BJ (cell line): ENCODE measurements at regions of chr4 and their contacts with region 1.

Region 1: DNA sequence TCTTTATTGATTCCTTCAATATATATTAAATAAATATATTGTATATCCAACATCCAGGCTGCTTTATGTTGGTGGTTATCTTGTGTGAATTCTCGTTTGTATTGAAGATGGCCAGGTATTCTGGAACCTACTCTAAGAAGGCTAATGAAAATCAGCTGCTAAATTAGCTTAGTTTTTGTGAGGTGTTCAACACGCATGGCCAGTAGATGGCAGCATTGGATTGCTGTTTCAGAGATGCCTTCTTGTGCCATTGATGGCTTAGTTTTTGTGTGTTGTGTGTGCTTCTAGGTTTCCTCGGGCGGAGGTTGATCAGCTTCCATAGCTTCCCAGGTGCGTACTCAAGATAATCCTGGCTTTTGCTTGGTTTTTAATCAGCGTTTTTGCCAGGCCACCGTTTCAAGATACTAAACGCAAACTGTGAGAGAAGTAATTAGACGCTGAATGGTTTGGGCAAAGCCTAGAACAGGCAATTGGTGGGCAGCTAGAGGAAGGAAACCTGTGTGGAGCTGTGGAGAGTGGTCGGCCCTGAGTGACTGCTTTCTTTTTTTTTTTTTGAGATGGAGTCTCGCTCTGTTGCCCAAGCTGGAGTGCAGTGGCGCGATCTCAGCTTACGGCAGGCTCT is 15.1 kb downstream of the NOCT start:
- DNase-seq: no peak
- H3K4me3 ChIP-seq: no peak overlapping the region
- H3K27me3 ChIP-seq: no peaks in the 10 kb centered on the region
- CTCF ChIP-seq: peak; percentile 83

Region 2: DNA sequence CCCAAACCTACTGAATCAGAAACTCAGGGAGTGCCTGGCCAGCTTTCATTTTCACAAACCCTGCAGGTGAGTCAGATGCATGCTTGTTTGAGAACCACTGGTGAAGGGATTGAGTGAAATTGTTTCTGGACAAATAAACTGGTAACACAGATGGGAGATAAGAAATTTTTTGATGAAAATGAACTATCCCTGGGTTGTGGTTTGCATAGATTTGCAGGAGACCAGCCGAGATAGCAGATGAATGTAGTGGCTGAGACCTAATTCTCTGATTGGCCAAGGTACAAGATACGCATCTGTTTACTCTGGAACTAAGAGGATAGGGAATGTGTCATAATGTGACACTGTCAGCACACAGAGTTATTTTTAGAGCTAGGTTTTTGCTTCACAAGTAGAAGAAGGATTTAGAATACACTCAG is 132.9 kb before region 1 on chr4:
- CTCF ChIA-PET with region 1: no interaction called
- POLR2A ChIA-PET with region 1: no interaction called
- DNase-seq: peak; percentile 72
- H3K4me3 ChIP-seq: no peak overlapping the region
- H3K27me3 ChIP-seq: no peaks in the 10 kb centered on the region
- CTCF ChIP-seq: no peak

Region 3: DNA sequence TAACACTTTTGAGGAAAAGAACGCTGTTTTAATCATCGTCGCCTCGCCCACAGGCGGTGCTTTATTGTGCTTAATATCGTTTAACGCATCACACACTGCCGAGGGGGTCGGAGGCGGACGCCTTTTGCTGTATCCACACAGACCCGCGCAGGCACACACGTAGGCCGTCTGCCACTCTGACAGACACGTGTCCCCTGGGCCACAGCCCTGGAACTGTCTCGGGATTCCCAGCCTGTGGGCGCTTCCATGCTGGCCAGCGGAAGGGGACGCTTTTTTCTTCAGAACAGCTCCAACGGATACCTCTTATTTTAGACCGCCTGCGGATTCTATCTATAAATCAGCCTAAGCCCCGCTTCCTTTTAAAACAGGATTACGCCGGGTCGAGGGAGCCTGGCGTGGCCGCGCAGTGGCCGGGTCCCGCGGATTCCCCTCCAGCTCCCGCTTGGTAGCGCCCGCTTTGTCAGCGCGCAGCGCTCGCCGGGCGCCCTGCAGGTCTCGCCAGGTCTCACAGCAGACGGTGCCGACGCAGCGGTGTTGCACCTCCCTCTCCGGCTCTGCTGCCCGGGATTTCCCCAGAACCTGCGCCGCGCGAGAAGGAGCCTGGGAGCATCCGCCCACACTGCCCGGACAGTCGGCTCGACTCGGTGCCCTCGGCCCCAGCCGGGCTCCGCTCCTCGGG is 15.3 kb before region 1 on chr4 and contains the start of gene NOCT:
- CTCF ChIA-PET with region 1: interaction called, 36 read pairs
- POLR2A ChIA-PET with region 1: no interaction called
- DNase-seq: no peak
- H3K4me3 ChIP-seq: peak within 1 kb of the TSS; percentile 59
- H3K27me3 ChIP-seq: no peaks in the 10 kb centered on the region
- CTCF ChIP-seq: no peak
- polyA plus RNA-seq, gene NOCT: 4.4 and 5.6 TPM in 2 replicates

Region 4: DNA sequence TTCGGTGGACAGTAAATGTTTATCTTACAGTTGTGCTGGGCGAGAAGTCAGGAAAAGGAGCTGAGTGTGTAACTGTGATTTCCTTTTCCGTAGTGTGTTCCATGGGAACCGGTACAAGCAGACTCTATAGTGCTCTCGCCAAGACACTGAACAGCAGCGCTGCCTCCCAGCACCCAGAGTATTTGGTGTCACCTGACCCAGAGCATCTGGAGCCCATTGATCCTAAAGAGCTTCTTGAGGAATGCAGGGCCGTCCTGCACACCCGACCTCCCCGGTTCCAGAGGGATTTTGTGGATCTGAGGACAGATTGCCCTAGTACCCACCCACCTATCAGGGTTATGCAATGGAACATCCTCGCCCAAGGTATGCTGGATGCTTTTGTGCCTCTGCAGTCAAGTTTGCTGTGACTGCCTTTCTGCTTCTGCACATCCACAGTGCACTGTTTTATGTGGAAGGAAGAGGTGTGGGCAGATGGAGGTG is 12.3 kb after region 1 on chr4:
- CTCF ChIA-PET with region 1: interaction called, 18 read pairs
- POLR2A ChIA-PET with region 1: no interaction called
- DNase-seq: no peak
- H3K4me3 ChIP-seq: no peak overlapping the region
- H3K27me3 ChIP-seq: no peaks in the 10 kb centered on the region
- CTCF ChIP-seq: no peak

Region 5: GRCh38 chr4:139099366-139099982 is 68.7 kb after region 1 on chr4:
- CTCF ChIA-PET with region 1: interaction called, 19 read pairs
- POLR2A ChIA-PET with region 1: no interaction called
- DNase-seq: no peak
- H3K4me3 ChIP-seq: no peak overlapping the region
- H3K27me3 ChIP-seq: no peaks in the 10 kb centered on the region
- CTCF ChIP-seq: peak; percentile 84